Activated CD4-positive, alpha-beta T cell treated with anti-CD3 and anti-CD28 coated beads, Interleukin-2, amount 10 ng/mL, durations not matched to agents 24 days and 14 days (primary cell): ENCODE measurements at regions of chr2 and their contacts with region 1.

Region 1: GRCh38 chr2:38720613-38721241 is 30.4 kb downstream of the SRSF7 start:
- DNase-seq: no peak
- H3K4me3 Mint-ChIP-seq: peak overlapping the region; percentile 56
- H3K27ac Mint-ChIP-seq: peak overlapping the region; percentile 60
- H3K4me1 Mint-ChIP-seq: peaks cover 46% of the 10 kb centered on the region
- H3K27me3 Mint-ChIP-seq: no peaks in the 10 kb centered on the region

Region 2: GRCh38 chr2:38315707-38316333 is 404.9 kb before region 1 on chr2:
- intact Hi-C with region 1: loop called (anchors 10 kb)
- DNase-seq: peak; percentile 81
- H3K4me3 Mint-ChIP-seq: no peak overlapping the region
- H3K27ac Mint-ChIP-seq: no peak overlapping the region
- H3K4me1 Mint-ChIP-seq: peaks cover 13% of the 10 kb centered on the region
- H3K27me3 Mint-ChIP-seq: no peaks in the 10 kb centered on the region

Region 3: GRCh38 chr2:38581193-38582147 is 139.3 kb before region 1 on chr2:
- intact Hi-C with region 1: loop called (anchors 2 kb)
- DNase-seq: peak; percentile 83
- H3K4me3 Mint-ChIP-seq: no peak overlapping the region
- H3K27ac Mint-ChIP-seq: peak overlapping the region; percentile 22
- H3K4me1 Mint-ChIP-seq: peaks cover 26% of the 10 kb centered on the region
- H3K27me3 Mint-ChIP-seq: no peaks in the 10 kb centered on the region

Region 4: GRCh38 chr2:38653715-38654527 is 66.8 kb before region 1 on chr2:
- intact Hi-C with region 1: loop called (anchors 2 kb)
- DNase-seq: peak; percentile 82
- H3K4me3 Mint-ChIP-seq: peak overlapping the region; percentile 63
- H3K27ac Mint-ChIP-seq: peak overlapping the region; percentile 87
- H3K4me1 Mint-ChIP-seq: peaks cover 58% of the 10 kb centered on the region
- H3K27me3 Mint-ChIP-seq: no peaks in the 10 kb centered on the region

Region 5: GRCh38 chr2:38690499-38691294 is 30.0 kb before region 1 on chr2:
- intact Hi-C with region 1: loop called (anchors 1 kb)
- DNase-seq: no peak
- H3K4me3 Mint-ChIP-seq: no peak overlapping the region
- H3K27ac Mint-ChIP-seq: peak overlapping the region; percentile 86
- H3K4me1 Mint-ChIP-seq: peaks cover 46% of the 10 kb centered on the region
- H3K27me3 Mint-ChIP-seq: no peaks in the 10 kb centered on the region

Region 6: GRCh38 chr2:38806015-38806732 is 85.4 kb after region 1 on chr2:
- intact Hi-C with region 1: no loop called
- DNase-seq: peak; percentile 60
- H3K4me3 Mint-ChIP-seq: no peak overlapping the region
- H3K27ac Mint-ChIP-seq: no peak overlapping the region
- H3K4me1 Mint-ChIP-seq: peaks cover 1% of the 10 kb centered on the region
- H3K27me3 Mint-ChIP-seq: no peaks in the 10 kb centered on the region

Region 7: GRCh38 chr2:38818565-38818964 is 97.8 kb after region 1 on chr2:
- intact Hi-C with region 1: no loop called
- DNase-seq: no peak
- H3K4me3 Mint-ChIP-seq: no peak overlapping the region
- H3K27ac Mint-ChIP-seq: no peak overlapping the region
- H3K4me1 Mint-ChIP-seq: no peaks in the 10 kb centered on the region
- H3K27me3 Mint-ChIP-seq: no peaks in the 10 kb centered on the region

Region 8: GRCh38 chr2:38875576-38876367 is 155.0 kb after region 1 on chr2 and contains the starts of genes DHX57 and MORN2:
- intact Hi-C with region 1: no loop called
- DNase-seq: peak; percentile 95
- H3K4me3 Mint-ChIP-seq: peak within 1 kb of the TSS; percentile 97
- H3K27ac Mint-ChIP-seq: peak within 1 kb of the TSS; percentile 96
- H3K4me1 Mint-ChIP-seq: peaks cover 21% of the 10 kb centered on the region
- H3K27me3 Mint-ChIP-seq: no peaks in the 10 kb centered on the region
- total RNA-seq, gene DHX57: 21.0 and 24.3 TPM in 2 replicates
- total RNA-seq, gene MORN2: 4.9 and 5.9 TPM in 2 replicates